AG04450 (cell line): ENCODE measurements at regions of chr11 and their contacts with region 1.

Region 1: DNA sequence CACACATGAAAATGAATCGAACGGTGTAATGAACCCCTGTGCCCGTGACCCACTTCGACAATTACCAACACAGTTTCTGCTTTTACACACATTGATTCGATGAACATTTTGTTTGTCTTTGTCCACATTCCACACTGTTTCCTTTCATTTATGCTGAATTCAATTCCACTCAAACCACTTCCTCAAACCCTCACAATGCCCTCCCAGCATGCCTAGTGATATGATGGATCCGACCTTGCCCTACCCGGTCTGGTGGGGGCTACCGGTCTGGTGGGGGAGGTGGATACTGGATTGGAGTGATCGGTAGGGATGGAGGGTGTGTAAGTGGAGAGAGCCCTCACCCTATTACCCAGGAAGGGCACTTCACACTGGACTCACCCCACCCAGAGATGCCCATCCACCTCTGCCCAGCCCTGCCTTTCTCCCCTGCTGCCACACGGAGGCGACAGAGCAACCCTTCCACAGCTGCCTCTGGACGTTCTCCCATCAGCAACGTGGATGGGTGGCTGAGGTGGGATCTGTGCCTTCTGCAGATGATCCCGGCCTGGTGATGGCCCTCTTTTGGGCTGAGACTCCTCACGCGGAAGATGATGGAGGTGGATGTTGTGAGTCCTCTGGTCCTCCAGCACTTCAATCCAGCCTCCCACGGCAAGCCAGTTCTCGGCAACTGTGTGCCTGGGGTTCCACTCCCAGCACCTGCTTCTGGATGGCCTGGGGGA is 33.0 kb upstream of the P2RY2 start:
- DNase-seq: no peak
- H3K4me3 ChIP-seq: no peak overlapping the region
- H3K27ac ChIP-seq: no peak overlapping the region
- H3K27me3 ChIP-seq: peaks cover 3% of the 10 kb centered on the region
- CTCF ChIP-seq: peak; percentile 79

Region 2: GRCh38 chr11:72831513-72832300 is 353.4 kb before region 1 on chr11:
- CTCF ChIA-PET with region 1: interaction called, 153 read pairs
- POLR2A ChIA-PET with region 1: no interaction called
- DNase-seq: no peak
- H3K4me3 ChIP-seq: no peak overlapping the region
- H3K27ac ChIP-seq: no peak overlapping the region
- H3K27me3 ChIP-seq: no peaks in the 10 kb centered on the region
- CTCF ChIP-seq: peak; percentile 98

Region 3: DNA sequence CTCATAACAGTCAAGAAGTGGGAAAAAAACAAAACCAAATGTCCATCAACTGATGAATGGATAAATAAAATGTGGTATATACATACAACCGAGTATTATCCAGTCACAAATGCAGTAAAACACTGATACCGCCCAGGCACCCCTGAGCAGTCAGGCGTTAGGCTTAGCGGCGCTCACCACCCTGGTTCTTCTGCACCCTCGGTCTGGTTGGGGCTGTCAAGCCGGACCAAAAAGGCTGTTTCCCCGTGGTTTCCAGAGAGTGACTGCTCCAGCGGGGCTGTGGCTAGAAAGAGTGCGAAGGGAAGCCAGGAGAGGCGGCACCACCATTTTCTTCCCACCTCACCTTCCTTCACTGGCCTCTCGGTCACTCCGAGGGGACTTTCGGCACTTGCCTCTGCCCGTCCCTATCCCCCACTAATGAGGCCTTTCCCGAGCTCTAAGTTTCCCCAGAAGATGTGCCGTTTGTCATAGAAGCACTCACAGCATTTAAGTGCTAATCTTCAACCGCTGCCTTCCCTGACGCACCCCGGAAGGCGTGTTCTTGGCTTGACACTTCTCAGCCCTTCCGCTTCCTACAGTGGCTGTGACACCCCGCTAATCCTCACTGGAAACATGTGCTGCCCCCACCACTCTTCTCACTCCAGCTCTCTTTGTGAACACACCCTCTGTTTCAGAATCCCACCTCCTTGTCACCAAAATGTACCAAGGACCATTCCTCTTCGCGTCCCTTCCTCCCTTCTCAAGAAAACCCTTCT is 85.4 kb before region 1 on chr11:
- CTCF ChIA-PET with region 1: no interaction called
- POLR2A ChIA-PET with region 1: no interaction called
- DNase-seq: no peak
- H3K4me3 ChIP-seq: no peak overlapping the region
- H3K27ac ChIP-seq: no peak overlapping the region
- H3K27me3 ChIP-seq: no peaks in the 10 kb centered on the region
- CTCF ChIP-seq: no peak

Region 4: DNA sequence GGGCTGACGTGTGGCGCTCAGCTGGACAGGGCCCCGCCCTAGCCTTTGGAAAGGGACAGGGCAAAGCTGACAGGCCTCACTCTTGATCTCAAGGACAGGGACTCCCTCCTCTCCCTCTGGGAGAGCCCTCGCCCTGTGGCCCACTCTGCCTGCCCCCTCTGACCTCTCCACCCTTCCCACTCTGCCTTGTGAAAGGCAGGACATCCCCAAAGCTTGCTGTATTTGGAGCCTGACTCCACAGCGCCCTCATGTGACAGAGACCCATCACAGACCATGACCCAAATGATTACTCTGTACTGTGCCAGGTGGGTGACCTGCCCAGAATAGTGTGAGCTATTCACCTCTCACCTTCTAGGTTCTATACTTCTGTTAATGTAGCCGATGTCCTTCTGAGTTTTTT is 51.7 kb after region 1 on chr11:
- CTCF ChIA-PET with region 1: interaction called, 12 read pairs
- POLR2A ChIA-PET with region 1: no interaction called
- DNase-seq: no peak
- H3K4me3 ChIP-seq: no peak overlapping the region
- H3K27ac ChIP-seq: no peak overlapping the region
- H3K27me3 ChIP-seq: no peaks in the 10 kb centered on the region
- CTCF ChIP-seq: peak; percentile 43

Region 5: DNA sequence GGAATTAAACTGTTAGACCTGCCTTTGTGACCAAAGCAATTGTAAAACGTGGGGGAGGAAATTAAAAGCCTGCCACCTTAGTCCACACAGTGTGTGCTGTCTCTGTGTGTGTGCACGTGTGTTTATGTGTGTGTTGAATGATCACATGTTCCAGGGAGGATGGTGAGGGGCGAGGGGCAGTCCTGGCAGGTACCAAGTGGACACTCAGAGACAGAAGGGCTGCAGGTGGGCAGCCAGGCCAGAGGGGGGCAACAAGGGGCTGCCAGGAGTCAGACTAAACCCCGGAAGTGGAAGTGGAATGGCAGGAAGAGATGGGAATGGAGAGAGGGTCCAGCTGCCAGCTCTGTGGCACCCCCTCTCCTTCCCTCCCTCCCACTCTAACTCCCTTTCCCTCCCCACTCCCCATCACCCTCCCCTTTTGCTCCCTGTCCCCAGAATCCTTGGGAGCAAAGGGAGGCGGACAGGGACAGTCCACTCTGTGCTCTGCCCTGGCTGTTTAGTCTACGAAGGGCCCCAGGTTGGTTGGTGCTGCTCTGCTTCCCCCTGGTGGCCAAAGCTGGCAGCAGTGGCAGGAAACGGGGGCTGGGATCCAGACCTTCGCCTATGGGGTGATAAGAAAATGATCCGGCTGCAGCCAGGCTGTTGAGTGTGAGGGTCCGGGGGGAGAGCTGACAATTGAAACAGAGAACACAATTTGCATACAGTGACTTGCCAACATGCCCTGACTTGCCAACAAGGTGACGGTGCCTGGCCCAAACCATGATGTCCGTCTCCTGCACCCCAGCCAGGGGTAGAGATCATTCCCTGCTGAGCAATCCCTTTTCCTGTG is 57.4 kb after region 1 on chr11:
- CTCF ChIA-PET with region 1: interaction called, 24 read pairs
- POLR2A ChIA-PET with region 1: no interaction called
- DNase-seq: peak; percentile 26
- H3K4me3 ChIP-seq: peak overlapping the region; percentile 7; the same call in 1 of the 2 replicates
- H3K27ac ChIP-seq: no peak overlapping the region
- H3K27me3 ChIP-seq: no peaks in the 10 kb centered on the region
- CTCF ChIP-seq: peak; percentile 97

Region 6: DNA sequence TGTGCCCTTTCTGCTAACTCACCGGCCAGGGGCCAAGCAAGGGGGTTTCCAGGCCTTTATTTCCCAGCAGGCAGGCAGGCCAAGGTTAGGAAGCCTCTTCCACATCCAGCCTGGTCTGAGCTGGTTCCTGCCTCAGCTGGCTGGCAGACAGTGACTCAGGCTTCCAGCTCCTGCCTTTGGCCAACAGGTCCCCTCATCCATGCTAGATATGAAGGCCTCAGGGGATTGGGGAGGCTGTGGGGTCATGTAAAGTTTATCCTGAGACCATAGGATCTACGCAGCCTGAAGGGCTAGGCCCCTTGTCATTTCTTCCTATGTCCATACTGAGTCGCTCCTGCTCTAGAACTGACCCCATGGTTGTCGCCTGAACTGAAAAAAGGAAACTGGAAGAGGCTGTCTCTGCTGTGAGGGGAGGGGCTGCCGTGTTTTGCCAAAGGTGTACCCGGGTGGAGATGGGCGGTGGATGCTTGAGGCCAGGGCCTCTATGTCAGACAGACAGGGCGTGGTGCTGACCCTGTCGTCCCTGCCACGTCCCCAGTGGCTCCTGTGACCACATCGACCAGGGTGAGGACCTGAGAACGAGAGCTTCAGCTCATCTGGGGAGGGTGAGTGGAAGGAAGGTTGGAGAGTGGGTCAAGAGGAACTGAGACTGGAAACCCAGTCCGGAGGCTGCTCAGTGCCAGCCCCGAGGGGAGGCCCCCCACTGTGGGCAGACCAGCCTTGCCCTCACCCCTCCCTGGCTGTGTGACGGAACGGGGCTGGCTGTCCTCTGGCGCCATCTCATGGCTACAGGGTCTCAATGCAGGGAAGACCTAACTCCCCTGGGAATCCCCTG is 104.0 kb after region 1 on chr11:
- CTCF ChIA-PET with region 1: interaction called, 35 read pairs
- POLR2A ChIA-PET with region 1: no interaction called
- DNase-seq: no peak
- H3K4me3 ChIP-seq: no peak overlapping the region
- H3K27ac ChIP-seq: no peak overlapping the region
- H3K27me3 ChIP-seq: no peaks in the 10 kb centered on the region
- CTCF ChIP-seq: peak; percentile 99

Region 7: DNA sequence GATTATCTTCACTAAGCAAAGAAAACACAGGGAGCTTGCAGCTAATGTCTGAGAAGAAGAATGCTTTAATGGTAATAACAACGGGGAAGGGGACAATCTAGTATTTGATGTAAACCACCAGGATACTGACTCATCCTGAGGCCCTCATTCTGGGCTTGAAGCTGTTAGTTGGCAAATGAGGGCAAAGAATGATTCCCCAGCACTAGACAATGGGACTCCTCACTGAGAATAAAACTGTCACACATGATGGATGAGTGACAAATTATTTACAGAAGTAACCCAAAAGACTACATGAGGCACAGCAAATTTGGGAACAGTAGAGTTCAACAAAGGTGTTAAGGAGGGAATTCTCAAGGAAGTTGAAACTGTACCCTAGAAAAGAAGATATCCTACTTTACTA is 336.5 kb after region 1 on chr11:
- CTCF ChIA-PET with region 1: no interaction called
- POLR2A ChIA-PET with region 1: no interaction called
- DNase-seq: no peak
- H3K4me3 ChIP-seq: no peak overlapping the region
- H3K27ac ChIP-seq: no peak overlapping the region
- H3K27me3 ChIP-seq: no peaks in the 10 kb centered on the region
- CTCF ChIP-seq: no peak